Heart left ventricle (tissue), 16 donors: ENCODE measurements at regions of chr3 and their contacts with region 1.

Region 1: DNA sequence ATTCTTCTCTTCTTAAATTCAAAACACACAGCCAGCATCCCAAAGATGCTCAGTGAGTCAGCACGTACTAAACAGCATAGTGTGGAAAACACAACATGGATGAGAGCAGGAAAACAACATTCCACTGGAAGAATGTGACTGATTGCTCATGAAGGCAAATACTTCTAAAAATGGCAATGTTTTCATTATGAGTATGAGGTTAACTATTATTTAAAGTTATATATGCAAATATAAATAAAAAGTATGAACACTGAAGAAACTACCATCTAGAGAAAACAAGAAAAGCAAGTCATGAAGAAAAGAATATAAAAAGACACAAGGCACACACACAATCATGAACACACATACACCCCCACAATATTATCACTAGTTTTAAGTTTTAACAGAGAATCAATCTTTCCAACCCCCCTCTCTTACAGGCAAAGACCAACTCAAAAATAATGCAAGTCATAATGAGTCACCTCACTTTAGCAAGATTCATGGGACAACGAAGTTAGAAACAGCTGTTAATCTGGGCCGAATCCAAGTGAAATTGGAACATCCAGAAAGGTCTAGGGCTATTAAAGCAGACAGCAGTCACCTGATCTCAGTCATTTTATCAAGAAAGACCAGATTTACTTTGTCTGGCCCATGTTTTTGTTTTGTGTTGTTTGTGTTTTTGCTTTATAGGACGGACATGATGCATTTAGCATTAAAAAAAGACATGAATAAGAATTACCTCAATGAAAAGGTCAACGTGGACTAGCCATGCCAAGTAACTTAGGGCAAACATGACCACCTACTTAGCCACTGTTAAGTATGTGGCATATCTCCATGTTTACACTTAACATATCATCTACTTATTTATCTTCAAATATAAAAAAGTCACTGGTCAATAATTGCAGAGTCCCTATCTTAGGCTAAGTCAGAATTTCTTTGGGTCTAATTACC is 18.1 kb downstream of the GBE1 start:
- DNase-seq: peak in 1 of 5 donors; percentile 35
- ATAC-seq: peak; percentile 42 to 80 (median 61)
- H3K4me3 ChIP-seq: no peak overlapping the region
- H3K27ac ChIP-seq: peak overlapping the region; percentile 24 to 85 (median 76)
- H3K4me1 ChIP-seq: peaks cover 5 to 62% (median 47%) of the 10 kb centered on the region in 12 donors
- H3K27me3 ChIP-seq: no peaks in the 10 kb centered on the region
- CTCF ChIP-seq: no peak
- POLR2A ChIP-seq: no peak

Region 2: DNA sequence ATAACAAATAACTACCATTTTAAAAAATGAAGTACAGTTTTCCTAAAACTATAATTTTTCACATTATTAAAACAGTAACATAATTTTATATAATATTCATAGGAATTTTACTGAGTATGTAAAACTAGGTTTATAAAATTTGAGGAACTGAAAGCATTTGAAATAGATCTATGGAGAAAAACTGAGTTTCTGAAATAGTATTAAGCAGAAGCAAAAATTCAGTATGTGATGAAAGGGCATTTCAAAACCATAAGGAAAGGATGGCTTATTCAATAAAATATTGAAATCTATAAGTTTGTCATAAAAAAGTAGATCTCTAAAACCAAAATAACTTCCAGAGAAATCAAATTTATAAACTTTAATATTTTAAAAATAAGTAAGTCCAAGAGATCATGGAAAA is 35.4 kb before region 1 on chr3:
- intact Hi-C with region 1: loop called in 1 of 10 experiments (anchors 5 kb)
- DNase-seq: no peak
- ATAC-seq: no peak
- H3K4me3 ChIP-seq: no peak overlapping the region
- H3K27ac ChIP-seq: peak overlapping the region in 1 of 12 donors; percentile 47
- H3K4me1 ChIP-seq: peaks cover 0 to 33% (median 17%) of the 10 kb centered on the region in 12 donors
- H3K27me3 ChIP-seq: no peaks in the 10 kb centered on the region
- CTCF ChIP-seq: no peak
- POLR2A ChIP-seq: no peak